ENCODE measurements at regions of chr1 and their contacts with region 1.

Region 1: DNA sequence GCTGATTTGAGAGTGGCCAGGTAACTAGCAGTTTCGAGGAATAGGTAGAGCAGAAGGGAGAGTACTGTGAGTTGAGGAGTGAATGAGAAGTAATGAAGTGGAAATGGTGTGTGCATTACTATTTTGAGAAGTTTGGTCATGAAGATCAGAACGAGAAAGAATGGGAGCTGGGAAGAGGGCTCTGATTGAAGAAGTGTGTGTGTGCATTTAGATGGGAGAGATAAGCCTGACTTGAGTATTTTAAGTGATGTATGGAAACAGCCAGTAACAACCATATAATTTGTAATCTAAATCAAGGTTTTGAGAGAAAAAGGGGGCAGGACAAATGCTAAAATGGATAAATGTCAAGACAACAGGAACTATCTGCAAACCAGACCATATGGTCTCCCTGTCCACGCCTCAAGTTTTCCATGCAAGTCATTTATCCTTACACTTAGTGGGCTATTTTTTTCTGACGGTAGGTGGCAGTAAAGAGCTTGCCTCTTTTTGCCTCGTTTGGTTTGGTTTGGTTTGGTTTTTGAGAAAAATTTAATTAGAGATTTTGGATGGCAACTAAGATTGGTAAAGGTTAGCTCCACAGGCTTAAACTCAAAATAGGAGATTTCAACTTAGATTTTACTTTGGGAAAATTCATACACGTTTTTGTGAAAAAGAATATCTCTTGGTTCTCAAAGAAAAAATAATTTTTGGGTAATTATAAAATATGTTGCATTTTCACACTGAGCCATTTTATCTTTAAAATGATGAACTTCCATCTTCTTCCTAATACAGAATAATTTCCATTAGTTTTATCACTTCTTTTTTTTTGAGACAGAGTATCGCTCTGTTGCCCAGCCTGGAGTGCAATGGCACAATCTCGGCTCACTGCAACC is 9.5 kb upstream of the B3GALNT2 start:
- DNase-seq: no peak
- ATAC-seq: peak; percentile 71
- H3K4me3 ChIP-seq: no peak overlapping the region
- H3K27ac ChIP-seq: no peak overlapping the region
- H3K4me1 ChIP-seq: no peaks in the 10 kb centered on the region
- H3K27me3 ChIP-seq: no peaks in the 10 kb centered on the region

Region 2: DNA sequence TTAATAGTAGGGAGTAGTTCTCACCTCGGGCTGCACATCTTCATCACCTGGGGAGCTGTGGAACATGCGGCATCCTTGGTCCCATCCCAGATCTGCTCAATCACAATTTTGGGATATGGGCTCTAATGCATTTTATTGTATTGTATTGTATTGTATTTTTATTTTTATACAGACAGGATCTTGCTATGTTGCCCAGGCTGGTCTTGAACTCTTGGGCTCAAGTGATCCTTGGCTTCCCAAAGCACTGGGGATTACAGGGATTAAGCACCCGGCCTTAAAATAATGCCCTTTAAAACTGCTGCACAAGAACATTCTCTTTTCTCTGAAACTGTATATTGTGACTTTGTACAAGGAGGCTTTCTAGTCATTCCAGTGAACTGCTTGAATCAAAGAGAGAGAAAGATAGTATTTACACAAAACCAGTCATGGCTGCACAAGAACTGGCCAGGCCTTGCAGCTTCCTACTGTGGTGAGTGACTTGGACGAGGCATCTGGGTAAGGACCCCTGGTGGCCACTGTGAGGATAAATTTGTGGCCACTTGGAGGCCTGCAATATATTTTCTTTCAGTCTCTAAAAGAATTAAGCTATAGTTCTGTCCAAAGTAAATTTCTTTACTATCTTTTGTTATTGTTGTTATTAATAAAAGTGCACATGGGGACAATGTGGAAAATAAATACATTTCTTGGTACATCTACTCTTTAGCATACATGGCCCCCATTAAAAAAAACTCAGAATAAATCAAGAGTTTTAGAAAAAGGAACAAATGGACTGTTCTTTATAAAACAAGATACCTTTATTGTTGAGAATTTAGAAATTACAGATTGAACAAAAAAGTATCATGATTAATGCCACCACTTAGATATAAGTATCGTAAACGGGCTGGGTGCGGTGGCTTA is 98.5 kb before region 1 on chr1:
- intact Hi-C with region 1: no loop called
- DNase-seq: peak in 1 of 2 donors; percentile 72
- ATAC-seq: peak; percentile 73
- H3K4me3 ChIP-seq: no peak overlapping the region
- H3K27ac ChIP-seq: no peak overlapping the region
- H3K4me1 ChIP-seq: no peaks in the 10 kb centered on the region
- H3K27me3 ChIP-seq: no peaks in the 10 kb centered on the region

Region 3: DNA sequence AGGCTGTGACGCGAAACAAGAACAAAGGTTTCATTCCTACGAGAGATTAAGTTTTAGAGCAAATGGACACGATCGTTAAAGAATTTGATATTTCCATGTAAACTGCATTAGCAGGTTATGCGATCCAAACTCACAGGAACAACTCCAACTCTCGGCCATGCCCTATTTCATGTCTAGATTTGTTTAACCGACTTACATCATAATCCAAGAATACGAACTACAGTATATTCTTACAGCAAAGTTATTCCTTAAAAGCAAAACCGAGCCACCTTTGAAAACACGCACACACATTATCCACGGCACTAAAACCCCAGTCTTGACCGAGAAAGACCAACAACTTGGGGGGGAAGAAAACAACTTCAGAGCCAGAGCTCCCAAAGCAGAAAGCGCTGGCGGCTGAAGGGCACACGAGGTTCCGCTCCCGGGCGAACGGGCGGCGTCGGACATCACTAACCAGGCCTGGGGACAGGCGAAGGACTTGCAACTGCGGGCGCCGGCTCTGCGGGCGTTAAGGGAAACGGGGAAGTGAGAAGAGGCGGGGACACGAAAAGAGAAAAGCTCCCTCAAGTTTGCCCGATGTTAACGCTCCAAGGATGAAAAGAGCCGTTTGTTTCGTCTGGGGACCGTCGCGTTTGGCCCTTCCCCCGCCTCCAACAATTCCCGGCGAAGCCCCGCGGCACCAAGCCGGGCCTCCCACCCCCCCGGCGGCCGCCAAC is 10.2 kb before region 1 on chr1:
- intact Hi-C with region 1: no loop called
- DNase-seq: peak; percentile 71 to 86
- ATAC-seq: no peak
- H3K4me3 ChIP-seq: peak overlapping the region; percentile 96 to 99
- H3K27ac ChIP-seq: peak overlapping the region; percentile 65 to 82
- H3K4me1 ChIP-seq: peaks cover 0 to 4% of the 10 kb centered on the region in 2 donors
- H3K27me3 ChIP-seq: no peaks in the 10 kb centered on the region

Region 4: GRCh38 chr1:235783148-235783776 is 269.5 kb after region 1 on chr1:
- intact Hi-C with region 1: loop called in 1 of 2 experiments (anchors 10 kb)
- DNase-seq: no peak
- ATAC-seq: no peak
- H3K4me3 ChIP-seq: no peak overlapping the region
- H3K27ac ChIP-seq: no peak overlapping the region
- H3K4me1 ChIP-seq: no peaks in the 10 kb centered on the region
- H3K27me3 ChIP-seq: peaks cover 0 to 1% of the 10 kb centered on the region in 2 donors

Region 5: GRCh38 chr1:236495467-236496112 is 981.9 kb after region 1 on chr1:
- intact Hi-C with region 1: no loop called
- DNase-seq: no peak
- ATAC-seq: no peak
- H3K4me3 ChIP-seq: no peak overlapping the region
- H3K27ac ChIP-seq: no peak overlapping the region
- H3K4me1 ChIP-seq: no peaks in the 10 kb centered on the region
- H3K27me3 ChIP-seq: no peaks in the 10 kb centered on the region

Measured in aorta (tissue), 5 donors.